ENCODE measurements at regions of chr9 and their contacts with region 1.

Region 1: GRCh38 chr9:120755827-120756434 is 37.3 kb downstream of the FBXW2 start:
- DNase-seq: no peak
- H3K4me3 ChIP-seq: no peak overlapping the region
- H3K27me3 ChIP-seq: no peaks in the 10 kb centered on the region
- CTCF ChIP-seq: peak; percentile 82

Region 2: GRCh38 chr9:120767456-120768167 is 11.7 kb after region 1 on chr9:
- CTCF ChIA-PET with region 1: interaction called, 45 read pairs
- POLR2A ChIA-PET with region 1: no interaction called
- DNase-seq: no peak
- H3K4me3 ChIP-seq: no peak overlapping the region
- H3K27me3 ChIP-seq: no peaks in the 10 kb centered on the region
- CTCF ChIP-seq: no peak

Region 3: DNA sequence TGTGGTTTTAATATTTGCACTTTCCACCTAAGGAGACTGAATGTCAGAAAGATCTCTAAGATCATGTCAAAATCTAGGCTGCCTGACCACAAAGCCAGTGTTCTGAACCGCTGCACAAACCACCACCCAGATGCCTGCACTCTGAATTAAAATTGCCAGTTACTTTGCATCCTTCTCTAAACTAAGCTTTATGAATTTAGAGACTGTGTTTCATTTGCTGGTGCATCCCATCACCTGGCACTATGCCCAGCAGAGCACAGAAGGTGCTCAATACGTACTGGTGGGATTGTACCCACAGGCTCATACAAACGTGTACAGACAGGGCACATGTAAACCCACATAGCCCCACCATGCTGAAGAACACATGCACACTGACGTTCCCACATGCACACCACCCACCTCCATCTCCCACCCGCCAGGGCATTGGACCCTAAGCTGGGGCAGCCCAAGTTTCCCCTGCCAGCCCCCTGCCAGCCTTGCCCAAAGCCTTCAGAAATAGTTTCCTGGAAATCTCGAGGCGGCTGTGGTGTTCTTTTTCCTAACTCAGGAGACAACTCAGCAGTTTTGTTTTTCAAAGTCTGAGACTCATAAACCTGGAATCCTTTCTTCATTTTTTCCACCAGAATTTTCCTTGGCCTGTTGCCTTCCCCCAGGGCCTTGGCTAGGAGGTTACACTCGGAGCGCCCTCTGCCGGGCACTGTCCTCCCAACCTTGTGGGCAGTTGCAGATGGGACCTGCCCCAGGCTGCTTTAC is 180.3 kb after region 1 on chr9:
- CTCF ChIA-PET with region 1: interaction called, 25 read pairs
- POLR2A ChIA-PET with region 1: no interaction called
- DNase-seq: peak; percentile 74
- H3K4me3 ChIP-seq: peak overlapping the region; percentile 29
- H3K27me3 ChIP-seq: peaks cover 1% of the 10 kb centered on the region; the same call in 1 of the 2 replicates
- CTCF ChIP-seq: peak; percentile 96

Region 4: GRCh38 chr9:120941022-120941770 is 185.3 kb after region 1 on chr9:
- CTCF ChIA-PET with region 1: interaction called, 25 read pairs
- POLR2A ChIA-PET with region 1: no interaction called
- DNase-seq: no peak
- H3K4me3 ChIP-seq: no peak overlapping the region
- H3K27me3 ChIP-seq: peaks cover 1% of the 10 kb centered on the region; the same call in 1 of the 2 replicates
- CTCF ChIP-seq: no peak

Region 5: DNA sequence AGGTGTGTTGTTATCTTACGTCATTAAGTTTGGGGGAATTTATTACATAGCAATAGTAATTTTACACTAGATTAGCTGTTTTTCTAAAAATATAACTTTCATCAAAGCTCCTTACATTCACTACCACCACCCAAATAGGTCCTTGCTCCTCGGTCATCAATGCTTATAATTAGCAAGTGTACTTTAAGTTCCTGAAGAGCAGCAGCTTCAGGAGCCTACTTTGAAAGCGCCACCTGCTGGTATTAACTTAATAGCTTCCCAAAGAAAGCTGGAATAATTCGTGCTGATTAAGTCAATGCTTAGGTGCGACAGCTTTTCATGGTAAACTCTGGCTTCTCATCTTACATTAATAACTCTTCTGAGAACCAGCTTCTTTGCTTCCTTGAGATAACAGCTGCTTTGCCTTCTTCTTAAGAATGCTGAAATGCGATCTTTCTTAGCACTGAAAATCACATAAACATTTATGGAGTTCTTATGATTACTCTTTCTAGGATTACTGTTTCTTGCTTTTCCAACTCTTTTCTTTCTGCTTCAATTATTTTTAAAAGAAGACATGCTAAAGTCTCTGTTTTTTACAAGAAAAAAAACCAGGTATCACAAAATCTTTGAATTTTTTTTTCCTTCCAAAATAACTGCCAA is 304.2 kb after region 1 on chr9:
- CTCF ChIA-PET with region 1: interaction called, 46 read pairs
- POLR2A ChIA-PET with region 1: no interaction called
- DNase-seq: no peak
- H3K4me3 ChIP-seq: no peak overlapping the region
- H3K27me3 ChIP-seq: no peaks in the 10 kb centered on the region
- CTCF ChIP-seq: peak; percentile 77